ENCODE measurements at regions of chr15 and their contacts with region 1.

Region 1: DNA sequence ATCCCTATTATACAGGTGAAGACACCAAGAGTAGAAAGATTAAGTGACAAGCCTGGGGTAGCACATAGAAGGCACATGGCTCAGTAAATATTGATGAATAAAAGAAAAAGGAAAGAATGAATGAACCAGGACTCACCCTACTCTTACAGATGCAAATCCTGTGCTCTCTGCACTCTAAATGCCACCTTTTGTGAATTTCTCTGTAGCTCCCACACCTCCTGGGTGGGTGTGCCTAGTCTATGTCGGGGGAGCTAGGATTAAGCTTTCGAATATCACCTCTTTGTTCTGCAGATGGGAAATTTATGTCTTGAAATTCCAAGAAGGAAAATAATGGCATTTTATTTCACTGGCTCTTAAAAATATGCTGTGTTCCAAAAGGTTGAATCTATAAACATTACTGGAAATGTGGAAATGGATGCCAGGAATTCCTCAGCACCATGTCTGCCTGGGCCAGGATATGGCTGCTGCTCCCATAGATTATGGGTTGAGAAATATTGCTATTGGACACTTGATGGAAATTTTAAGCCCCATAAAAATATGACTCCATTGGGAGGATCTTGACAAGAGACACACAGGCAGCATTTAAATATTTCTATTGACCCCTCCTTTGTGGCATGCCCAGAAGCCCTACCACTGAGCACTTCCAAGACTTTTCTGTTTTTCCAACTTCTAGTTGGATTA is 43.3 kb downstream of the CCNB2 start:
- DNase-seq: no peak
- H3K4me3 ChIP-seq: no peak overlapping the region
- H3K27ac ChIP-seq: peak overlapping the region in 1 of 2 donors; percentile 43
- H3K4me1 ChIP-seq: no peaks in the 10 kb centered on the region
- H3K27me3 ChIP-seq: no peaks in the 10 kb centered on the region
- CTCF ChIP-seq: no peak
- POLR2A ChIP-seq: no peak

Region 2: DNA sequence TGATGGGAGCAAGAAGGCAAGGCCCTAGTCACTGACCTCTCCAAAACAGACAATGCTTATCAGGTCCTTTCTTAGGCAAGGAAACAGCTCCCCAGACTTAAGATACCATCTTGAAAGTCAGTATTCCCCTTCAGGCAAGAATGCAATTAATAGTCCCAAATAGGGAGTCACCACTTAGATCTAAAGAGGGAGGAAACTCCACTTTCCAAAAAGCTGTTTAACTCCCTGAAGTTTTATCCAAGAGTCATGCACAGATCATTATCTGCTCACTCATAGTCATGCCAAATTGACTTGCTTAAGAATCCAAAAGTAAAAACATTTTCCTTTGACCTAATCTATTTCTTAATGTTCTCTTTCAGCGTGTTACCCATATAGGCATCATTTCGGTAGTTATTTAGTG is 60.6 kb after region 1 on chr15:
- intact Hi-C with region 1: loop called (anchors 2 kb)
- DNase-seq: no peak
- H3K4me3 ChIP-seq: no peak overlapping the region
- H3K27ac ChIP-seq: no peak overlapping the region
- H3K4me1 ChIP-seq: no peaks in the 10 kb centered on the region
- H3K27me3 ChIP-seq: no peaks in the 10 kb centered on the region
- CTCF ChIP-seq: no peak
- POLR2A ChIP-seq: no peak